Breast epithelium (tissue), 4 donors: ENCODE measurements at regions of chr11 and their contacts with region 1.

Region 1: GRCh38 chr11:6705905-6706535 is 22.9 kb upstream of the MRPL17 start:
- DNase-seq: no peak
- H3K4me3 ChIP-seq: no peak overlapping the region
- H3K27ac ChIP-seq: no peak overlapping the region
- H3K4me1 ChIP-seq: no peaks in the 10 kb centered on the region
- H3K27me3 ChIP-seq: no peaks in the 10 kb centered on the region
- CTCF ChIP-seq: peak; percentile 60 to 75 (median 71)
- POLR2A ChIP-seq: no peak

Region 2: GRCh38 chr11:7413961-7414915 is 708.2 kb after region 1 on chr11:
- intact Hi-C with region 1: loop called (anchors 5 kb)
- DNase-seq: no peak
- H3K4me3 ChIP-seq: no peak overlapping the region
- H3K27ac ChIP-seq: no peak overlapping the region
- H3K4me1 ChIP-seq: no peaks in the 10 kb centered on the region
- H3K27me3 ChIP-seq: no peaks in the 10 kb centered on the region
- CTCF ChIP-seq: no peak
- POLR2A ChIP-seq: no peak

Region 3: DNA sequence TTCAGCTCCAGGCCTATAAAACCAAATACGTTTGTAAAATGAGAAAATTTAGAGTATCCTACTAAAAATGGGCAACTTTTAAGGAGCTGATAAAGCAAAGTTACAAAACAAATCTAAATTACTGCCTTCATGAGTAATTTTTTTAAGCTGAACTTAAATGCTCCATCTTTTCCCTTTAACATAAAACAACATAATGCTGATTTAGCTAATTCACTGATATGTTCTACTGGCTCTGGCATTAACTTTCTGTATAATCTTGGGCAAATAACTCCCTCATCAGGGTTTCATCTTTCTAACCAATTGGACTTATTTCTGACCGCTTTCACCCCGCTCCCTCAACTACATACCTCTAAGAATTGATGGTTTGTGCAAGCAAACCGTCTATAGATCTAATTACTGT is 1235.1 kb after region 1 on chr11:
- intact Hi-C with region 1: loop called (anchors 5 kb)
- DNase-seq: no peak
- H3K4me3 ChIP-seq: no peak overlapping the region
- H3K27ac ChIP-seq: no peak overlapping the region
- H3K4me1 ChIP-seq: no peaks in the 10 kb centered on the region
- H3K27me3 ChIP-seq: no peaks in the 10 kb centered on the region
- CTCF ChIP-seq: no peak
- POLR2A ChIP-seq: no peak

Region 4: GRCh38 chr11:8018484-8019313 is 1312.7 kb after region 1 on chr11:
- intact Hi-C with region 1: no loop called
- DNase-seq: peak; percentile 64 to 73
- H3K4me3 ChIP-seq: peak overlapping the region; percentile 64 to 83 (median 69)
- H3K27ac ChIP-seq: peak overlapping the region; percentile 89 to 94
- H3K4me1 ChIP-seq: no peaks in the 10 kb centered on the region
- H3K27me3 ChIP-seq: no peaks in the 10 kb centered on the region
- CTCF ChIP-seq: no peak
- POLR2A ChIP-seq: no peak